Activated CD4-positive, alpha-beta memory T cell treated with anti-CD3 and anti-CD28 coated beads, Interleukin-2, amount 10 ng/mL, durations not matched to agents 7 days and 5 days (primary cell): ENCODE measurements at regions of chr11 and their contacts with region 1.

Region 1: DNA sequence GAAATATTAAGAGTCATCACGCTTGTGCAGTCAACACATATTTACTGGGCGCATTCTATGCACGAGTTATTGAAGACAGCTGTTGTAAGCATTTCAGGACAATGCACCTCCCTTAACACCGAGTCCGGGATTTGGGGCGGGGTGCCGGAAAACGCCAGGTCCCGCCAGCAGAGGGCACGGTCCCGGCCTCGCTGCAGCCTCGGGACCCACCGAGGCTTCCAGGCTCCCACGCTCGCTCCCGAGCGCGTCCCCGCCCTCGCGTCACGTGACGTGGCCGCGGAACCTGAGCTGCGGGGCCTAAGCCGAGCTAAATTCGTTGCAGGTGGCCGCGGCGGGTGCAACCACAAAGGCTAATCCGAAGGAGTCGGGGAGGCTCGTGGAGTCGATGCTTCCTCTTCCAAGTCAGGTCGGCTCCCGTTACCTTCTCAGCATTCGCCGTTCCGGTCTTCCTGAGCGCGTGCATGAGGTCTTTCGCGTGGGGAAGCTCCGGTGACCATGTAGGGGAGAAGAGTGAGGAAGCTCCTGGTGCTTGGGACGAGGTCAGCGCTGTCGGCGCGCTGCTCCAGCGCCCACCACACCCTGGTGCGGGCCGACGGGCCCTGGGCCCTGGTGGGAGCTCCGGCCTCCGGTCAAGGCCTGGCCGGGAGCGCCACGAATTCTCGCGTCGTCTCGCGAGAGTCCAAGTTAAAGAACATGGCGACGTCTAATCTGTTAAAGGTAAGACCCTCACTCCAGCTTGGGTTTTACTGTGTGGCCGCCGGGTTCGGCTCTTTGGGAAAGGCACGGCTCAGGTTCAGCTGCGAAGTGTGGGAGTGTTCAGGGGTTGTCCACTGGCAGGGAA is at the start of gene CUL5:
- DNase-seq: peak; percentile 90
- H3K4me3 Mint-ChIP-seq: peak within 1 kb of the TSS; percentile 98
- H3K27ac Mint-ChIP-seq: peak within 1 kb of the TSS; percentile 92
- H3K4me1 Mint-ChIP-seq: peaks cover 17% of the 10 kb centered on the region
- H3K27me3 Mint-ChIP-seq: no peaks in the 10 kb centered on the region
- total RNA-seq, gene CUL5: 27.1 to 28.3 TPM

Region 2: DNA sequence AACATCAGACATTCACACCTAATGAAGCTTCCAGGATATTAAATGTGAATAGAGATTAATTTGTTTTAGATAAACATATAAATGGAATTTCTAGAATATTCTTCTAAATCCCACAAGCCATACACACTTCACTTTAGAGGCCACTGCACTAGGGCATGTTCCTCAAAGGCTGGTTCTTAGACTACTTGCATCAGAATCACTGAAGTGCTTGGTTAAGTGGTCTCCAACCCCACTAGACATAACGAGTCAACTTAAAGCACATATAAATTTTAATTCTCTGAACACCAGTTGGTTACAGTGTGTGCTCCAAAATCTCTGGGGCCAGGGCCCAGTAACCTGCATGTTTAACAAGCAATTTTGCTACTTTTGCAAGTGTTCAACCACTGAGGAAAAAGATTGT is 435.4 kb before region 1 on chr11:
- CTCF ChIA-PET with region 1: no interaction called
- POLR2A ChIA-PET with region 1: no interaction called
- DNase-seq: no peak
- H3K4me3 Mint-ChIP-seq: no peak overlapping the region
- H3K27ac Mint-ChIP-seq: no peak overlapping the region
- H3K4me1 Mint-ChIP-seq: no peaks in the 10 kb centered on the region
- H3K27me3 Mint-ChIP-seq: peaks cover 6% of the 10 kb centered on the region

Region 3: DNA sequence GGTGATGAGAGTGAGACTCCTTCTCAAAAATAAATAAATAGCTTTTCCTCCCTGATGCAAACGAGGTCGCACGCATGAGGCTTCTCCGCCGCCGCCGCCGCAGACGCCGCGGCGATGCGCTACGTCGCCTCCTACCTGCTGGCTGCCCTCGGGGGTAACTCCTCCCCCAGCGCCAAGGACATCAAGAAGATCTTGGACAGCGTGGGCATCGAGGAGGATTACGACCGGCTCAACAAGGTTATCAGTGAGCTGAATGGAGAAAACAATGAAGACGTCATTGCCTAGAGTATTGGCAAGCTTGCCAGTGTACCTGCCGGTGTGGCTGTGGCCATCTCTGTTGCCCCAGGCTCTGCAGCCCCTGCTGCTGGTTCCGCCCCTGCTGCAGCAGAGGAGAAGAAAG is 100.6 kb before region 1 on chr11:
- CTCF ChIA-PET with region 1: no interaction called
- POLR2A ChIA-PET with region 1: no interaction called
- DNase-seq: no peak
- H3K4me3 Mint-ChIP-seq: no peak overlapping the region
- H3K27ac Mint-ChIP-seq: no peak overlapping the region
- H3K4me1 Mint-ChIP-seq: no peaks in the 10 kb centered on the region
- H3K27me3 Mint-ChIP-seq: peaks cover 13% of the 10 kb centered on the region

Region 4: DNA sequence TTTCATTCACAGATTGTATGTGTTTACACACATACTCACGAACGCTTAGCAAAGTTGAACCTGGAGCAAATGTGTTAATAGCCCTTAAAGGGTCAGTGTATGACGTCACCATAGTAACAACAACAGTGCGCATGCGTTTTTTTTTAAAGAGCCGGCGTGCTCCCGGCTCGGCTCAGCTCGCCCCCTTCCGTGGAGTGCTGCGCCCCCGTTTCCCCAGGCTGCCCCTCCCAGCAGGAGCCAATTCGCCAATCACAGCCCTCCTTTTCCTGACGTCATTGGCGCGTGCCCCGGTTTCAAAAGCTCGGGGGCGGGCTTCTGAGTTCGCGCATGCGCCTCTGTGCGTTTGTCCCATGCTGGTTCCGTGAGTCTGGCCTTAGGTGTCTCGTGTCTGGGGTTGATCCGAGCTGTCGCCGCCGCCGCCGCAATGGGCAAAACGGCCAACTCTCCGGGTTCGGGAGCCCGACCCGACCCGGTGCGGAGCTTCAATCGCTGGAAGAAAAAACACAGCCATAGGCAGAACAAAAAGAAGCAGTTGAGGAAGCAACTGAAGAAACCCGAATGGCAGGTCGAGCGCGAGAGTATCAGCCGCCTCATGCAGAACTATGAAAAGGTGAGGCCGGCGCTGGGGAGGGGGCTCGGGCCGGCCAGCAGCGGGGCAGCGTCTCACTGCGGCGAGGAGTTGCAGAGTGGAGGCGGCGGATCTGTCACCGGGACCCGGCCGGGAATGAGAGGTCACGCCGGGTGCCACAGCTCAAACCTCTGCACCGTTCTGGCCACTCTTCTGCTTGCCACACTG is 656.1 kb after region 1 on chr11 and contains the start of gene DDX10:
- CTCF ChIA-PET with region 1: interaction called, 10 read pairs
- POLR2A ChIA-PET with region 1: interaction called, 4 read pairs
- DNase-seq: peak; percentile 98
- H3K4me3 Mint-ChIP-seq: peak within 1 kb of the TSS; percentile 99
- H3K27ac Mint-ChIP-seq: peak within 1 kb of the TSS; percentile 66
- H3K4me1 Mint-ChIP-seq: peaks cover 32% of the 10 kb centered on the region
- H3K27me3 Mint-ChIP-seq: no peaks in the 10 kb centered on the region
- total RNA-seq, gene DDX10: 20.5 to 23.2 TPM